AG04449 (cell line): ENCODE measurements at regions of chr19 and their contacts with region 1.

Region 1: DNA sequence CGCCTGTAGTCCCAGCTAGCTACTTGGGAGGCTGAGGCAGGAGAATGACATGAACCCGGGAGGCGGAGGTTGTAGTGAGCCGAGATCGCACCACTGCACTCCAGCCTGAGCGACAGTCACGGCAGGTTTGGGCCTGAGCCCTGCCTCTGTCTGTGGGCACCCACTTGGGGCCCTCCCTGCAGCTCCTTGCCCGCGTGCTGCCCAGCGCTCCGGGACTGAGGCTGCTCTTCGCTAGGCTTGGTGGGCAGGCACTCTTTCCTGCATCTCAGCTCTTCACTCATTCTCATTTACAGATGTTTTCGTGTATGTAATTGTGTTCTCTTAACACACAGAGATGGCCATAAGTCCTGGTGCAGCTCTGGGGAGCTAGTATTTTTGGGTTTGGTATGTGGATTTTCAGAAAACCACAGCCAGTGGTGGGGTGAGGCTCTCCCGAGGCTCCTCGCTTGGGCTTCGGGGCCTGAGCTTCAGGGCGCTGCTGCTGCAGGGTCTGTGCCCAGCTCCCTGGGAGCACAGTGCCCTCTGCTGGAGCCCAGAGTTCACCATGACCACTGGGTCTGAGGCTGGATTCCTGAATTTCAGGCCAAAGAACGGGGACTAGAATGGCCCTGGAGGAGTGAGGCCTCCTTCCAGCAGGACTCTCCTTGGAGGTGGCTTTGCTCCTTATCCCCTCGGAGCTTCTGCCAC is 15.2 kb downstream of the UPF1 start:
- DNase-seq: no peak
- H3K4me3 ChIP-seq: no peak overlapping the region
- CTCF ChIP-seq: peak; percentile 99

Region 2: GRCh38 chr19:18450931-18451845 is 395.8 kb before region 1 on chr19:
- CTCF ChIA-PET with region 1: interaction called, 28 read pairs
- POLR2A ChIA-PET with region 1: no interaction called
- DNase-seq: no peak
- H3K4me3 ChIP-seq: no peak overlapping the region
- CTCF ChIP-seq: peak; percentile 99

Region 3: DNA sequence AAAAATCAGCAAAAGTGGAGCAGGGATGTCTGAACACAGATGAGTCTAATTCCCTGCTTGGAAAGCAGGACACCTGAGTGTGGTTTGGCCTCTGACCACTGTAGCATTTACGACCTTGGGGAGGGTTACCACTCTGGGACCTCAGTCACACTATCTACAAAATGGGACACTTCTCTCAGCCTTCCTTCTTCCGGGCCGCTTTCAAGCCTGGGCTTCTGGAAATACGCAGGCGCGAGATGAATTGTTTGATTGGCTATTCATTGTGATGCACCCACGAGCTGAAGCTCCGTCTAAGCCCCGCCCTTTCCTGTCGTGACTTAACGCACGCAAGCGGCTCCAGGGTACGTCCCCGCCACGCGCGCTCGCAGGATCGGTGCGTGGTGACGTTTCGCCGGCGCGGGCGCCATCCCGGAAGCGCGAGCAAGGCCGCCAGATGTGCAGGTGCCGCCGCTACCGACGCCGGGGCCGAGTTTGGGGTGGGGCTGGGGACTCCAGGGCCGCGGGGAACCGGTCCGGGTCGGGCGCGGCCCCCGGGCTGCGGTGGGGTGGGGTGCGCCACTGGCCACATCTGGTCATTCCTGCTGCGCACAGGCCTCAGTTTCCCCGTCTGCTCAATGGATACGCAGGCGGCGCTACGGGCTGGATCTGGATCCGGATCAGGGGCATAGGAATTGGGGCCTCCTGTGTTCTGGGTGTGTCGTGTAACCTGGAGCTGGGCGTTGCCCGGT is 289.4 kb before region 1 on chr19 and contains the start of gene KXD1:
- CTCF ChIA-PET with region 1: interaction called, 11 read pairs
- POLR2A ChIA-PET with region 1: no interaction called
- DNase-seq: peak; percentile 92
- H3K4me3 ChIP-seq: peak within 1 kb of the TSS; percentile 91
- CTCF ChIP-seq: no peak

Region 4: DNA sequence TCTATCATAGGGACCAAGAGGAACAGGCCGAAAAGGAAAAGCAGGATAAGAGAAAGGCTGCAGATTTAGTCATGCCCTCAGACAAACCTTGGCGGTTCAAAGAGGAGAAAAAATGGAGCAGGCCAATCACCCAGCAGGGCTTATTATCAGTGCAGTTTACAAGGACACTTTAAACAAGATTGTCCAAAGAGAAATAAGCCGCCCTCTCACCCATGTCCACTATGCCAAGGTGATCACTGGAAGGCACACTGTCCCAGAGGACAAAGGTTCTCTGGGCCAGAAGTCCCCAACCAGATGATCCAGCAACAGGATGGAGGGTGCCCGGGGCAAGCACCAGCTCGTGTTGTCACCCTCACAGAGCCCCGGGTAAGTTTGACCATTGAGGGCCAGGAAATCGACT is 266.7 kb before region 1 on chr19:
- CTCF ChIA-PET with region 1: interaction called, 286 read pairs
- POLR2A ChIA-PET with region 1: no interaction called
- DNase-seq: no peak
- H3K4me3 ChIP-seq: no peak overlapping the region
- CTCF ChIP-seq: no peak

Region 5: DNA sequence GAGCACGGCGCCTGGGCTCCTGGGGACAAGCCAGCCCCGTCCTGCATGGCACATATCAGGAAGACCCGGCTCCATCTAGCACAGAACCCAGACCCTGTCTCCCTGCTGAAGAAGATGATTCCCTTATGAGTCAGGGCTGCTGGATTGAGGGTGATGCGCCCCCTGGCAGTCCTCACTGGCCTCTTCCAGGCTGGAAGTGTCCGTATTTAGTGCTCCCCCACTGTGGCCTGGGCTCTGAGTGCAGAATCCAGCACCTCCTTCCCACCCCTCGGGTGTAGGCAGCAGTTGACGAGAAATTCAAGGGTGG is 70.8 kb before region 1 on chr19:
- CTCF ChIA-PET with region 1: interaction called, 14 read pairs
- POLR2A ChIA-PET with region 1: no interaction called
- DNase-seq: no peak
- H3K4me3 ChIP-seq: no peak overlapping the region
- CTCF ChIP-seq: peak; percentile 66

Region 6: GRCh38 chr19:18865973-18866799 is 19.2 kb after region 1 on chr19:
- CTCF ChIA-PET with region 1: interaction called, 249 read pairs
- POLR2A ChIA-PET with region 1: no interaction called
- DNase-seq: no peak
- H3K4me3 ChIP-seq: no peak overlapping the region
- CTCF ChIP-seq: peak; percentile 94